ENCODE measurements at regions of chr19 and their contacts with region 1.

Region 1: DNA sequence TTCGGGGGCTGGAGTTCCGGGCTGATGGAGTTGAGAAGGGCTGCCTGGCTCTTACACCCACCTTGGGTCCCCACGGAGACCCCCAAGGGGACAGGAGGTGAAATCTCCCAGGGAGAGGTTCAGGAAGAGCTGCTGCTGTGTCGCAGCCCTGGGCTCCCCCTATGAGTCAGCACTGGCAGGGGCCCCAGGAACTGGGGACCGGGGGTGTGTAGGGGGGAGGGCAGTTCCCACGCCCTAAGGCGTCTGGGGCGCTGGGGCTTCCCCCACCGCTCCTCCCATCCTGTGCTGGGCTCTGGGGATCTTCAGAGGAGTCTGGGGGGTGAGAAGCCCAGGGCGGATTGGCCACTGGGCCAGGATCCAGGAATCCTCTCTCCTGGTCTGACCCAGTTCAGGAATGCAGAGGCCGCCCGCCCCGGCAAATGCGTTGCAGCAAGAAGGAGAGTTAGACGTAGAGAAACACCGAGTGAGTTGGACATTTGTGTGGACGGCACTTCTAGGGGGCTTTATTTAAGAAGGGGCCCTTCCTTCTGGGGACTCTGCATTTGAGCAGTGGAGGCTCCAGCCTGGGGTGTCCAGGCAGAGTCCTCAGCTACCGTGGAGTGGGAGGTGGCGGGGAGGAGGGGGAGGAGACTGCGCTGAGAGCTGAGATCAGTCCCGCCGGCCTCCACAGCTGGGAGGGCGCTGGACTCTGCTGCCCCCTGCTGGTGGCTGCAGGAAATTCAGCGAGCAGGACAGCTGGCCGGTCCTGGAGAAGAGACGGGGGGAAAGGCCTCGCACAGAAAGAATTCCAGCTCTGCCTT is 15.0 kb upstream of the NANOS3 start:
- DNase-seq: peak; percentile 88
- H3K4me3 Mint-ChIP-seq: peak overlapping the region; percentile 80
- H3K27ac Mint-ChIP-seq: peak overlapping the region; percentile 85
- H3K4me1 Mint-ChIP-seq: peaks cover 44% of the 10 kb centered on the region
- H3K27me3 Mint-ChIP-seq: peaks cover 27% of the 10 kb centered on the region

Region 2: GRCh38 chr19:13774217-13775191 is 87.4 kb before region 1 on chr19 and contains the start of gene C19orf53:
- CTCF ChIA-PET with region 1: interaction called, 112 read pairs
- POLR2A ChIA-PET with region 1: interaction called, 7 read pairs
- DNase-seq: peak; percentile 93
- H3K4me3 Mint-ChIP-seq: peak within 1 kb of the TSS; percentile 94
- H3K27ac Mint-ChIP-seq: peak within 1 kb of the TSS; percentile 91
- H3K4me1 Mint-ChIP-seq: peaks cover 23% of the 10 kb centered on the region
- H3K27me3 Mint-ChIP-seq: no peaks in the 10 kb centered on the region
- total RNA-seq, gene C19orf53: 91.3 to 92.5 TPM

Region 3: DNA sequence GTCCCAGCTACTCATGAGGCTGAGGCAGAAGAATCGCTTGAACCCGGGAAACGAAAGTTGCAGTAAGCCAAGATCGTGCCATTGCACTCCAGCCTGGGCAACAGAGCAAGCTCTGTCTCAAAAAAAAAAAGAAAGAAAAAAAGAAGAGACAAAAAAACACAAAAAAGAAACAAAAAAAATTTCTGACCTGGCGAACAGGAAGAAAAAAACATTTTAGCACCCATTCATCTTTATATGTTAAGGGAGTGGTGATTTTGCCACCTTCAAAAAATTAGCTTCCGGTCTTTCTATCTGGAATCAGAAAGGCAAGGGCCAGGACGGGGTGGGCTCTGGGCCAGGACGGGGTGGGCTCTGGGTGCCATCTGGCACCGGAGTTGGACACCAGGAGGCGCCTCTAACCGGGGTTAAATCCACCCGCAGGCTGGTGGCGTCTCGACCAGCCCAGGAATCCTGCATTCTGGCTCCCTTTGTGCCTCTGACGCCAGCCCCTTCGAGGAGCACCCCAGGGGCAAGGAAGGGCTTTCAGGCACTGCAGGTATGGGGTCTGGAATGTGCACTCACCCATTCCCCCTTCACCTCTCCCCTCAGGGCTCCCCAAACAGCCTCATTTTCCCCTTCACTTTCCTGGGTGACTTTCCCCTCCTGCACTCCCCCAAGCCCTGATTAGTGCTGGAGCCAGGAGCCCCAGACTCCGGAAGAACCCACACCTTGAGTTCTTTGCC is 77.0 kb before region 1 on chr19:
- CTCF ChIA-PET with region 1: interaction called, 112 read pairs
- POLR2A ChIA-PET with region 1: interaction called, 3 read pairs
- DNase-seq: peak; percentile 75
- H3K4me3 Mint-ChIP-seq: no peak overlapping the region
- H3K27ac Mint-ChIP-seq: peak overlapping the region; percentile 57
- H3K4me1 Mint-ChIP-seq: peaks cover 35% of the 10 kb centered on the region
- H3K27me3 Mint-ChIP-seq: no peaks in the 10 kb centered on the region

Region 4: GRCh38 chr19:13835731-13836723 is 25.9 kb before region 1 on chr19:
- CTCF ChIA-PET with region 1: interaction called, 20 read pairs
- POLR2A ChIA-PET with region 1: interaction called, 3 read pairs
- DNase-seq: no peak
- H3K4me3 Mint-ChIP-seq: peak overlapping the region; percentile 72
- H3K27ac Mint-ChIP-seq: peak overlapping the region; percentile 90
- H3K4me1 Mint-ChIP-seq: peaks cover 61% of the 10 kb centered on the region
- H3K27me3 Mint-ChIP-seq: no peaks in the 10 kb centered on the region

Region 5: DNA sequence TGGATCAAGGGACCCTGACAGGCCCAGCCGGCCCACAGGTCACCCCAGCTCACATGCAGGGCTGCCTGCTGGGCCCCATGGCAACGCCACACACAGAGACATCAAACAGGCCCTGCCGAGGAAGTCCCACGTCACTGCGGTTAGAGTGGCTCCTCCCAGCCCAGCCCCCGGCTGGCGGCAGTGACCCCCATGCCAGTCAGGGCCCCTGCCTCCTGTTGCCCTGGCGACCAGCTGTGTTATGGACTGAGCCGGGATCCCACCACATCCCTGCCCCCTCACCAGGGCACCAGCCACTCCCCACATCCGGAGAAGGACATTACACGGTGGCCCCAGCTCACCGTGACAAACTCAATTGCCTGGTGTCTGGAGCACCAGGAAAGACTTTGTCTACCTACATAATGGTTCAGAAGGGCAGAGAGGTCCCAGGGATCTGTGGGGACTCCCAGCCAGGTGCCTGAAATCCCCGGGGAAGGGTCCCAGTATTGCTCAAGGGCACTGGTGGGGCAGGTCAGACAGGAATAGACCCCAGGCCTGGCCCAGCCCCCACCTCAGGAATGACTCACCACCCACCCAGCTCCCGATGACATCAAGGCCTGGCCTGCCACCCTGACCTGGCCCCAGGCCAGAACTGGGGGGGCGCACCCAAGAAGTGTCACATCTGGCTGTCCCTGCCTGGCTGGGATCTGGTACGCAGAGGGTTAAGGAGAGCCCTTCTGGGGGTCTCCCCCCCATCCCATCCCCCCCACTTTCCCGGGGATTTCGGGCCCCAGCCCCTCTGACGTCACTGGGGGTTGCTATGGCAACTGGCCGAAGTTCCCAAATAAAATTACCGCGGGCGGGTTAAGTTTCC is 15.2 kb before region 1 on chr19:
- CTCF ChIA-PET with region 1: interaction called, 69 read pairs
- POLR2A ChIA-PET with region 1: interaction called, 3 read pairs
- DNase-seq: peak; percentile 97
- H3K4me3 Mint-ChIP-seq: peak overlapping the region; percentile 70
- H3K27ac Mint-ChIP-seq: peak overlapping the region; percentile 95
- H3K4me1 Mint-ChIP-seq: peaks cover 52% of the 10 kb centered on the region
- H3K27me3 Mint-ChIP-seq: no peaks in the 10 kb centered on the region

Region 6: DNA sequence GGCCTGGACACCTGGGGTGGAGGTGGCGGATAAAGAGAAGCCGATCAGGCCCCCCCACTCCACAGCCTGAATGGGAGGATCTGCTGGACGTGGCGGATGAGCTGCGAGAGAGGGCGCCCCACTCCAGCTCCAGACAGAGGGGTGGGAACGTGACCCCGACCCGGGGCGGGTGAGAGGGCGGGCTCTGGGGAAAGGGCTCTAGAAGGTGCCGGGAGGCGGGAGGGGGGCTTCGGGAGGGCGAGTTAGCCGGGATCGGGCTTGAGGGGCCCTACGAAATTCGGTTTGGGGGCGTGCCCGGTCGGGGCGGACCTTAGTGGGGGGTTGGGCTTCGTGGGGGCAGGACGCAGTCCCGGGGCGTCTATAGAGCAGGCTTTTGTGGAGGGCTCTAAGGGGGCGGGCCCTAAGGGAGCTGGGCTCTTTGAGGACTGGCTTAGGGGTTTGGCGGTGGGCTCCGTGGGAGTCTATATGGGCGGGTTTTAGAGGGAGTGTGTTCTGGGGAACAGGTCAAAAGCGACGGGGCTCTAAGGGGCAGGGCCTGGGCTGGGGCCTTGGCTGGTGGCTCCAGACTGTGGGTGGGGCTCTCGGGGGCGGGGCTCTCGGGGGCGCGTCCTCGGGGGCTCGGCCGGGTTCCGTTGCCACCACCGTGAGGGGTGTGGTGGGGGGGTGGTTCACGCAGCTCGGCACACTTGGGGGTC is 10.9 kb after region 1 on chr19:
- CTCF ChIA-PET with region 1: interaction called, 39 read pairs
- POLR2A ChIA-PET with region 1: no interaction called
- DNase-seq: peak; percentile 37
- H3K4me3 Mint-ChIP-seq: peak overlapping the region; percentile 50
- H3K27ac Mint-ChIP-seq: no peak overlapping the region
- H3K4me1 Mint-ChIP-seq: peaks cover 5% of the 10 kb centered on the region
- H3K27me3 Mint-ChIP-seq: peaks cover 7% of the 10 kb centered on the region

Region 7: GRCh38 chr19:14073261-14073924 is 211.5 kb after region 1 on chr19:
- CTCF ChIA-PET with region 1: interaction called, 10 read pairs
- POLR2A ChIA-PET with region 1: no interaction called
- DNase-seq: peak; percentile 75
- H3K4me3 Mint-ChIP-seq: peak overlapping the region; percentile 84
- H3K27ac Mint-ChIP-seq: peak overlapping the region; percentile 48
- H3K4me1 Mint-ChIP-seq: peaks cover 30% of the 10 kb centered on the region
- H3K27me3 Mint-ChIP-seq: peaks cover 13% of the 10 kb centered on the region